Kidney (tissue), 22 donors: ENCODE measurements at regions of chr7 and their contacts with region 1.

Region 1: DNA sequence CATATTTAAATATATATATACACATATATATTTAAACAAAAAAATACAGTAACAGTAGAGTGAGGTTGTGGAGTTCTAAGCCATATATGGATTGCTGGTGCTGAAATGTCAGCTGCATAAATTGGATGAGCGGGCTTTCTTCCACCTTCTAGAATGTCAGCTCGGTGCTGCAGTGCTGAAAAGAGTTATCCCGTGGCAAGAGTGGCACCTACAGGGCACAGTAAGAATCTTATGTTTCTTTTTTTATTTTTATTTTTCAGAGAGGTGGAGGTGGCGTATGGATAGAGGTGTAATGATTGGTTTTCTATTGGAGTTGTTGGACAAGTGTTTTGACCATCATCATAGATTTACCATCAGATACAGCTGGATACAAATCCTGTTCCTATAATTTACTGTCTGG is 86.2 kb upstream of the DYNC1I1 start:
- DNase-seq: peak in 4 of 5 donors; percentile 57 to 82 (median 76)
- H3K4me3 ChIP-seq: no peak overlapping the region
- H3K27ac ChIP-seq: no peak overlapping the region
- H3K4me1 ChIP-seq: no peaks in the 10 kb centered on the region
- H3K27me3 ChIP-seq: no peaks in the 10 kb centered on the region
- CTCF ChIP-seq: peak; percentile 51

Region 2: DNA sequence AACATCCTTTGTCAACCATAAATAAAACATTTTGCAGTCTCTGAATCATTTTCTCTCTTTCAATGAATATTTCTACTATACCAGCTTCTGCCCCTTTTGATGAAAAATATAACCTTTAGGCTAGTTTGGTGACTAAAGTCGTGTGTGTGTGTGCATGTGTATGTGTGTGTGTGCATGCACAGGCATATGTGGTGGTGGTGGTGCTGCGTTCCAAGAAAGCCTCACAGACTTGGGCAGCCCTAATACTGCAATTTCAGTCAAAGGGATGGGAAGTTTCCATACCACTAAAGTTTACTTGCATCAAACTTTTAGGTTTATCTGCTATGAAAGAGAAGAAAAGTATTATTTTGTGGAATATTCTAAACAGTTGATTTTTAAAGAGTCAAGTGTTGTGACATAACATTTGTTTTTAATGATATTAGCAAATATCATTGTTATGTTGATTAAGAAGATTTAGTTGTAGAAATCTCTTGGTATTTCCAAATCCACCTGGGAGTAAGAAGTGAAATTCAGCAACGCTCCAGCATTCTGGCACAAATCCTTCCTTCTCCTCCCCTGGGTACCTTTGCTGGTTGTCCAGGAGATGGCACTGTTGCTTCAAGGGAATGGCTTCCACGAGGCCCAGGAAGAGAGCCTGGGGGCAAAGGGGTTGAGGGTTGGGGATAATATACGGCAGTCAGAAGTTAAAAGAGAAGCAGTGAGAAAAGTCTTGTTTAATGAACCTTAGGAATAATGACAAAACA is 158.9 kb before region 1 on chr7:
- intact Hi-C with region 1: loop called (anchors 5 kb)
- DNase-seq: peak in 4 of 5 donors; percentile 67 to 86 (median 76)
- H3K4me3 ChIP-seq: no peak overlapping the region
- H3K27ac ChIP-seq: no peak overlapping the region
- H3K4me1 ChIP-seq: peaks cover 0 to 11% (median 4%) of the 10 kb centered on the region in 3 donors
- H3K27me3 ChIP-seq: no peaks in the 10 kb centered on the region
- CTCF ChIP-seq: peak; percentile 94